Activated T-helper 1 cell treated with anti-CD3 and anti-CD28 coated beads, Interleukin-12 subunit alpha, Interleukin-12 subunit beta, Interleukin-2, Interleukin-4 antibody, amounts not matched to agents 30 ng/mL and 10 ng/mL and 1 ng/mL, durations not matched to agents 14 hours and 24 hours and 36 hours (primary cell): ENCODE measurements at regions of chr14 and their contacts with region 1.

Region 1: DNA sequence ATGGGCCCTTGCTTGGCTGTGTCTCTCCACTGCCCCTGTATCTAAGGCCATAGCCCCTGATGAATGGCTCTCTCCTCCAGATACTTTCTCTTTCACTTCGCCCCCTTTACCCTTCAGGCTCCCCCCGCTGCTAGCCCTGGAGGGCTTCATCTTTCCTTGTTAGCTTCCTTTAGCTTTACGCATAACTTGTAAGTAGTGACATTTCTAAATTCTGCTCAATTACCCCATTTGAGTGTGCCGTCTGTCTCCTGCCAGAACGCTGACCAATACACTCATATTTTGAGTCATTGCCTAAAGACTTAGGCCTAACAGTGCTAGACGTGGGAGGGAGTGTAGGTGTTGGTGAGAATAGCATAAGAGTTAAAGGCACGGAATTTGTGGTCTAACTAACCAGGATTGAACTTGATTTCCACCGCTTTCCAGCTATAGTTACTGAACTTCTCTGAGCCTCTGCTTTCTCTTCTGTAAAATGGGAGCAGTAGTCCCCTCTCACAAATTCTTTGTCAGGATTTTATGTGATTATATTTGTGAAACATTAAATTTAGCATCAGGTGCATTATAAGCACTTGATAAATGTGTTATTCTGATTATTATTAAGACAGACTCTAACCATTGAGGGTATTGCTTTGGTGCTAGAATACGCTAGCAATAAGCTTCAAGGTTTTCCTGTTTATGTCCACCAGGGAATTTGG is 129.3 kb downstream of the ZFP36L1 start:
- DNase-seq: peak; percentile 26
- H3K4me3 Mint-ChIP-seq: peak overlapping the region; percentile 45
- H3K27ac Mint-ChIP-seq: peak overlapping the region; percentile 72
- H3K4me1 Mint-ChIP-seq: peaks cover 55% of the 10 kb centered on the region
- H3K27me3 Mint-ChIP-seq: peaks cover 4% of the 10 kb centered on the region

Region 2: GRCh38 chr14:68248481-68249255 is 414.9 kb before region 1 on chr14:
- intact Hi-C with region 1: loop called (anchors 1 kb)
- DNase-seq: no peak
- H3K4me3 Mint-ChIP-seq: no peak overlapping the region
- H3K27ac Mint-ChIP-seq: no peak overlapping the region
- H3K4me1 Mint-ChIP-seq: peaks cover 41% of the 10 kb centered on the region
- H3K27me3 Mint-ChIP-seq: no peaks in the 10 kb centered on the region

Region 3: DNA sequence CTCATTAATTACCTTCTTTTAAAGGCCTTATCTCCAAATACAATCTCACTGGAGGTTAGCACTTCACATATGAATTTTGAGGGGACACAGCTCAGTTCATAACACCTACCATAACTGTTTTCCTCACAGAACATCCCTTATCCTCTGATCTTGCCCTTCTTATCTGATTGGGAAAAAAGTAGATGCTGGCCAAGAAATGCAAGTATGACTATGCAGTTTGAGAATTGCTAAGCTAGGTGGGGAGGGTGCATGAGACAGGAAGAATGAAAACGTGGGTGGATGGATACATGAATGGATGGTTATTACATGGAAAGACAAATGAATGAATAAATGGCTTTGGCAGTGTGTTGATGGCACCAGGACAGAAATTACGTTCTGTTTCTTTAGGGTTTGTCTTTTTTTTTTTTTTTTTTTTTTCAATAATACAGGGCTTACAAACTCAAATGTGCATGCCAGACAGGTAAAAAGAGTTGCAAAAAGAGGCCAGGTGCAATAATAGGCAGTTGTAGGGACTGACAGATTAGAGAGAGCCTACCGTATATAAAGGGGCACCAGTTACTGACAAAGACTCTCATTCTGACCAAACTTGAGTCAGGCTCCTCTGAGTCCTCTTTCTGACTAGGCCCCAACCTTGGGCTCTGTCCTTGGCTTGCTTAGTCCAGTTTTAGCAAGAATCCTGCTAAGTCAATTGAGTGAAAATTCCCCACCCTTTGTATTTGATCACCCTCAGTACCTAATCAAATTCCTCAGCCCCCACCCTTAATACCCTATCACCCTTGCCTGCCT is 175.5 kb before region 1 on chr14:
- intact Hi-C with region 1: loop called (anchors 5 kb)
- DNase-seq: no peak
- H3K4me3 Mint-ChIP-seq: no peak overlapping the region
- H3K27ac Mint-ChIP-seq: peak overlapping the region; percentile 32
- H3K4me1 Mint-ChIP-seq: peaks cover 36% of the 10 kb centered on the region
- H3K27me3 Mint-ChIP-seq: no peaks in the 10 kb centered on the region

Region 4: GRCh38 chr14:68676511-68676943 is 13.0 kb after region 1 on chr14:
- intact Hi-C with region 1: no loop called
- DNase-seq: no peak
- H3K4me3 Mint-ChIP-seq: no peak overlapping the region
- H3K27ac Mint-ChIP-seq: no peak overlapping the region
- H3K4me1 Mint-ChIP-seq: peaks cover 27% of the 10 kb centered on the region
- H3K27me3 Mint-ChIP-seq: no peaks in the 10 kb centered on the region

Region 5: DNA sequence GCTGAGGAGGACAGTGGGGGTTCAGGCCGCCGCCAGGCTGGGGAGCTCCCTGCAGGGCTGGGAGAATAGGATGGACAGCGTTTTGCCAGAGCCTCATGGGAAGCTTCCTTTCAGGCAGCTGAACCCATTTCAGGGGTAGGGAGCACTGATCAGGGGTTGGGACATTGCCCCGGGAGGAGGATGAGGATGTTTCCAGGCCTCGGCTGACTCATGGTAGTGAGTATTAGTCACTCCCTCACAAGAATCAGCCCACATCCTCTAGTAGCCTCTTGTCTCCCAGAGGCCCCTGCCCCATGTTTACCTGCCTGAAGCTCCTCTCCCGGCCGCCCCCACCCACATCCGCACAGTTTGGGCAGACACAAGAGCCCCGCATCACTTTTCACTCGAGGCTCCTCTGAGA is 39.6 kb after region 1 on chr14:
- intact Hi-C with region 1: loop called (anchors 1 kb)
- DNase-seq: no peak
- H3K4me3 Mint-ChIP-seq: no peak overlapping the region
- H3K27ac Mint-ChIP-seq: no peak overlapping the region
- H3K4me1 Mint-ChIP-seq: peaks cover 12% of the 10 kb centered on the region
- H3K27me3 Mint-ChIP-seq: peaks cover 4% of the 10 kb centered on the region

Region 6: DNA sequence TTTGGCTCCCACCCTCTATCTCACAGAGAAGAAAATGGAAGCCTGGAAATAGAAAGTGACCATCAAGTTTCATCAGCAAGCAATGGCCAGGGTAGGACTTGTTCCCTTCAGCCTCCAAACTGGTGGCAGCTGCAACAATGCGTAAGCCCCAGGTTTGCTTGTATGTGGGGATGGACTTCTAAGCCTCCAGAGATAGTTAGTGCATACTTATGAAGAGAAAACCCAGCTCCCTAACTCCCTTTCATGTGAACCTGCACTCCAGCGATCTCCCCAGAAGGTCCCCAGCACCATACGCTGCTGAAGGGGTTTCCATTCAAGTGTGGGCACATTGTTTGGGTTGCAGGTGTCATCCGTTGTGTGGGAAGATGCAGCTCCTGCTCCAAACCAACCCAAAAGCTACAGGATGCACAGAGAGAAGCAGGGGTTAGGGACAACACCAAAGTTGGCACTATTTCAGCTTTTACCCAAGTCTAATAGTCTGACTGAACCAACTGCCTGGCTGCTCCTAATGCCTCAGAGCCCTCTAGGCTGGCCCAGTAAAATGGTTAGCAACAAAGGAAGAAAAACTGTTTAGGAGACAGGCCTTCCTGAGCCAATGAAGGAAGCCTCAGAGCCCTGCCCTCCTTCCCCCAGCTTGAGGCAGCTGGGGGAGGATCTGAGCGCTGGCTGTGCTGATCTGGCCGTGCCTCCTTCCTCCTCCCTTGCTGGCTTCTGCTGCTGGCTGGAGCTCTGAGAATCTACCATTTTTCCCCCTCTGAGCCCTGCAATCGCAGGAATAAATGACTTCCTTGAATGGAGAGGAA is 117.0 kb after region 1 on chr14:
- intact Hi-C with region 1: loop called (anchors 1 kb)
- DNase-seq: no peak
- H3K4me3 Mint-ChIP-seq: peak overlapping the region; percentile 78
- H3K27ac Mint-ChIP-seq: peak overlapping the region; percentile 93
- H3K4me1 Mint-ChIP-seq: peaks cover 72% of the 10 kb centered on the region
- H3K27me3 Mint-ChIP-seq: no peaks in the 10 kb centered on the region

Region 7: DNA sequence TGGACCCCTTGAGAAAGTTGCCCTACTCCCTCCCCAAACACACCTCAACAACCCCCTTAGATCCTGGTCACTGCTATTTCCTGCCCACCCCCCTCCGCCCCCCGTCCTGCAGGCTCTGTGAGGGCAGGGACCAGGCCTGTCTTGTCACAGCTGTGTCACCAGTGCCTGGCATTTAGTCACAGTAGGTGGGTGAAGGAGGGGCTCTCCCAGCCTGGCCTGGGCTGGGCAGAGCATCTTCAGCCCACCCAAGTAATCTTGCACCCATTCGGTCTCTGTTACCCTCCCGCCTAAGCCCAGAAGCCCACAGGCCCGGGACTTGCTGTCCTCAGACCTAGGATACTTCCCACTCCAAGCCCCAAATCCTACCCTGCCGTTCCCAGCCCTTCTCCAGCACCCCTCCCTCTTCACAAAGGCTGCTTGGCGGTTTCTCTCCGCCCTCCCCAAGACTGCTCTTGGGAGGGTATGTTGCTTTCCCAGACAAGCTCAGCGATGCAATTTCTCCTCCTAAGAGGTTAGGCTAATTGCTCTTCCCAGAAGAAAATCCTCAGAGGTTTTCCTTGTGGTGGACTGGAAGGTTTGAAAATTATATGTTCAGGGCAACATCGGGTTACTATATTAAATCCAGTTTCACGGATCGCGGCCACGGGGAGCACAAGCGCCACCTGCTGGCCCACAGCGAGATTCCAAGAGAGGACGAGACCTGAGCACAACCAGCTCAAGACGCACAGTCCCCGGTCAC is 180.1 kb after region 1 on chr14:
- intact Hi-C with region 1: loop called (anchors 1 kb)
- DNase-seq: peak; percentile 56
- H3K4me3 Mint-ChIP-seq: peak overlapping the region; percentile 13
- H3K27ac Mint-ChIP-seq: no peak overlapping the region
- H3K4me1 Mint-ChIP-seq: peaks cover 24% of the 10 kb centered on the region
- H3K27me3 Mint-ChIP-seq: peaks cover 13% of the 10 kb centered on the region